Mammary epithelial cell (primary cell): ENCODE measurements at regions of chr19 and their contacts with region 1.

Region 1: GRCh38 chr19:50896591-50897190 is 14.5 kb downstream of the KLK4 start:
- DNase-seq: peak; percentile 98
- H3K4me3 ChIP-seq: no peak overlapping the region
- H3K27ac ChIP-seq: peak overlapping the region; percentile 55
- H3K4me1 ChIP-seq: peaks cover 18% of the 10 kb centered on the region
- H3K27me3 ChIP-seq: peaks cover 2% of the 10 kb centered on the region
- CTCF ChIP-seq: no peak

Region 2: GRCh38 chr19:50804420-50805272 is 92.0 kb before region 1 on chr19:
- CTCF ChIA-PET with region 1: no interaction called
- dilution Hi-C with region 1: no loop called
- in situ Hi-C with region 1: no loop called
- intact Hi-C with region 1: loop called (anchors 1 kb)
- DNase-seq: peak; percentile 98
- H3K4me3 ChIP-seq: peak overlapping the region; percentile 80 to 90 (median 83)
- H3K27ac ChIP-seq: peak overlapping the region; percentile 95
- H3K4me1 ChIP-seq: peaks cover 17% of the 10 kb centered on the region
- H3K27me3 ChIP-seq: no peaks in the 10 kb centered on the region
- CTCF ChIP-seq: no peak

Region 3: DNA sequence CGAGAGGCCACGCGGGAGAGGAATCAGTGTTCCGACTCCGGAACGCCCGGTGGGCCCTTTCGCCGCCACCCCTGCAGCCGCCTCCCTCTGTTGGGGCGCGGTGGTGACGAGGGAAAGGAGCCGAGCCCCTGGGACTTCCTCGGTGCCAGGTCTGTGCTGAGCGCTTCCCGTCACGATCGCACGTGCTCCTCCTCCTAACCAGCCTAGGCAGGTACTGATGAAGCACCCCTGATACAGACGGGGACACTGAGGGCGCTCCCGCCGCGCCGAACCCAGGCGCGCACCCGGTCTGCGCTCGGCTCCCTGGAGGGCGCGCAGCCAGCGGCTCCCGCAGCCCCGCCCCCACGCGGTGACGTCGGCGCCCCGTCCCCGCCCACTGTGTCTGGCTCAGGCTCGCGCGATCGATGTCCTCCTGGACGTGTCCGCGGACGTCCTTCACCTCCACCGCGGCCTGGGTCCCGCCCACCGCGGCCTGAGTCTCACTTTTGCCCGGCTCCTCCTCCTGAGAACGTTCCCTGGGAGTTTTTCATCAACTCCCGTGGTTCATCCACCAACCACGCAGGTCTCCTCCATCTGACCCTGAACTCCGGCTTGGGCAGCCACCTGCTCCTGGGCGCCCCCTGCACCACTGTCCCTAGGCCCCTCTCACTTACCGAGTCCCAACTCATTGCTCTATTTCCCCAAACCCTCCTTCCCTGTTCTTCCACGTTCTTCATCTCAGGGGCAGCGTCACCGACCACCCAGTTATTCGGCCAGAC is 60.7 kb before region 1 on chr19:
- CTCF ChIA-PET with region 1: interaction called, 3 read pairs
- dilution Hi-C with region 1: no loop called
- in situ Hi-C with region 1: no loop called
- intact Hi-C with region 1: loop called (anchors 5 kb)
- DNase-seq: peak; percentile 67
- H3K4me3 ChIP-seq: peak overlapping the region; percentile 49 to 65 (median 60)
- H3K27ac ChIP-seq: no peak overlapping the region
- H3K4me1 ChIP-seq: peaks cover 13% of the 10 kb centered on the region
- H3K27me3 ChIP-seq: no peaks in the 10 kb centered on the region
- CTCF ChIP-seq: no peak

Region 4: GRCh38 chr19:51097166-51097738 is 200.6 kb after region 1 on chr19:
- CTCF ChIA-PET with region 1: no interaction called
- dilution Hi-C with region 1: no loop called
- in situ Hi-C with region 1: no loop called
- intact Hi-C with region 1: loop called (anchors 1 kb)
- DNase-seq: peak; percentile 93
- H3K4me3 ChIP-seq: no peak overlapping the region
- H3K27ac ChIP-seq: no peak overlapping the region
- H3K4me1 ChIP-seq: peaks cover 13% of the 10 kb centered on the region
- H3K27me3 ChIP-seq: no peaks in the 10 kb centered on the region
- CTCF ChIP-seq: peak; percentile 67 to 75

Region 5: GRCh38 chr19:51108066-51108804 is 211.5 kb after region 1 on chr19 and contains the start of gene CTU1:
- CTCF ChIA-PET with region 1: no interaction called
- dilution Hi-C with region 1: no loop called
- in situ Hi-C with region 1: no loop called
- intact Hi-C with region 1: no loop called
- DNase-seq: peak; percentile 99
- H3K4me3 ChIP-seq: peak within 1 kb of the TSS; percentile 65 to 88 (median 80)
- H3K27ac ChIP-seq: peak within 1 kb of the TSS; percentile 75
- H3K4me1 ChIP-seq: peaks cover 11% of the 10 kb centered on the region
- H3K27me3 ChIP-seq: peaks cover 4% of the 10 kb centered on the region
- CTCF ChIP-seq: no peak
- total RNA-seq, gene CTU1: 5.5 to 10.2 TPM

Region 6: DNA sequence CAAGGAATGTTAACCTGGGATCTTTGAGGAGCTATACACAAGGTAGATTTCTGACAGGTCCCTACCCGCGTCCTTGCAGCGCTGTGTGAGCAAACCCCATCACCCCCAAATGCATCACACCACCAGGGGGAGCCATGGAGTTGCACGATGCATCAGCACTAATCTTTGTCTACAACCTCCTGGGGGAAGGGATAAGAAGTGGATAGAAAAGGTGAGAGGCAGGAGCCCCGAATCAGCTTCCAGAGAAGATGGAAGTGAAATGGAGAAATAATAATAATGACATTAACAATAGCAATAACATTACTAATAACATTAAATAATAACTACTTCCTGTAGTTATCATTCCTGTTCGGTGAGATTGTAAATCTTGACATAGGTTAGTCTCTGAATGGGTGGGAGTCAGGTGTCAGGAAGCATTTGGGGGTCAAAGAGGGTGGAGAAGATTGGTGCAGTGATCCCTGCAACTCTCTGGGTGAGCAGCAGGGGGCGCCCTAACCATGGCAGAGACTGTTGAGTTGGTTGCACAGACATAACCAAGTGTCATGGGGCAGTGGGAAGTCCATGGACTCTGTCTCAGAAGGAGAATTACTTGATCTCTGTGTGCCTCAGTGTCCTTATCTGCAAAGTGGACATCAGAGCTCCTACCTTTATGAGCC is 261.9 kb after region 1 on chr19:
- CTCF ChIA-PET with region 1: no interaction called
- dilution Hi-C with region 1: no loop called
- in situ Hi-C with region 1: no loop called
- intact Hi-C with region 1: loop called (anchors 1 kb)
- DNase-seq: peak; percentile 37
- H3K4me3 ChIP-seq: no peak overlapping the region
- H3K27ac ChIP-seq: no peak overlapping the region
- H3K4me1 ChIP-seq: no peaks in the 10 kb centered on the region
- H3K27me3 ChIP-seq: no peaks in the 10 kb centered on the region
- CTCF ChIP-seq: peak; percentile 86 to 93